OCI-LY7 (cell line): ENCODE measurements at regions of chr4 and their contacts with region 1.

Region 1: DNA sequence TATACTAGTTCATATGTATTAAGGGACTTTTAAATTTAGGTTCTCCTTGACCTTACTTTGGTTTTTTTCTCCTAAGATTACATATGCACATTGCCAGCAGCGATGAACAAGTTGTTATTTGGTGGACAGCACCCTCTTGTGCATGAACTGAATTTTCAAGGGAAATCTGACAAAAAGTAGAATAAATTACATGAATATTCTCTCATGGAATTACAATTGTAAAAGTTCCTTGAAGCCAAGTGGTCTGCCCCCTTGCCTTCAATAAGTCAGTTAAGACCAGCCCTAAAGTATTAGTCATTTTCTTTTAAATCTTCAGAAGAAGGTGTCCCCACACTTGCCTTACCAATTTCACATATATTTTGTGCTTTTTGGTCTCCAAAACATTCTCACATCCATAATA is 30.7 kb upstream of the SMARCA5 start:
- DNase-seq: peak; percentile 77
- H3K4me3 ChIP-seq: no peak overlapping the region
- H3K27ac ChIP-seq: no peak overlapping the region
- H3K4me1 ChIP-seq: peaks cover 15% of the 10 kb centered on the region
- CTCF ChIP-seq: peak; percentile 91

Region 2: GRCh38 chr4:142883040-142883832 is 599.6 kb before region 1 on chr4:
- CTCF ChIA-PET with region 1: no interaction called
- POLR2A ChIA-PET with region 1: no interaction called
- intact Hi-C with region 1: loop called (anchors 10 kb)
- DNase-seq: peak; percentile 5
- H3K4me3 ChIP-seq: no peak overlapping the region
- H3K27ac ChIP-seq: no peak overlapping the region
- H3K4me1 ChIP-seq: no peaks in the 10 kb centered on the region
- CTCF ChIP-seq: peak; percentile 65

Region 3: GRCh38 chr4:143184217-143185116 is 298.4 kb before region 1 on chr4 and contains the start of gene USP38:
- CTCF ChIA-PET with region 1: no interaction called
- POLR2A ChIA-PET with region 1: no interaction called
- intact Hi-C with region 1: loop called (anchors 5 kb)
- DNase-seq: peak; percentile 90
- H3K4me3 ChIP-seq: peak within 1 kb of the TSS; percentile 94
- H3K27ac ChIP-seq: peak within 1 kb of the TSS; percentile 75
- H3K4me1 ChIP-seq: peaks cover 29% of the 10 kb centered on the region
- CTCF ChIP-seq: 0 out of 2 replicates have a peak, but pooled peaks have one; percentile 46
- total RNA-seq, gene USP38: 21.8 and 23.6 TPM in 2 replicates

Region 4: DNA sequence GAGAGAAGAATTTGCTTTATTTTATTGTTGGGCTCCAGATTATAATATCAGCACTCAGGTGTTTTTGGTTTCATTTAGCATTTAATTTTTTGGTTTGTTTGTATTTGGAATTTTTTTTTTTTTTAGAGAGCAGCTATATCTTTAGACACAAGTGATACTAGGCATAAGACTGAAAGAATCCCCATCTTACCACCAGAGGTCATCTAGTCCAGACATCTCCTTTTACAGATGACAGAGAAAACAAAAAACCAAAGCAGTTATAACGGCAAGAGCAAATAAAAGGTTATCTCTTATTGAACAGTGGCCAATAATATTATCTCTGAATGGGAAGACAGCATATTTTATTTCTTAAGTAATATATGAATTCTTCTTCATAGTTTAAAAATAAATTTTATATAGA is 275.3 kb before region 1 on chr4:
- CTCF ChIA-PET with region 1: no interaction called
- POLR2A ChIA-PET with region 1: no interaction called
- intact Hi-C with region 1: loop called (anchors 1 kb)
- DNase-seq: peak; percentile 29
- H3K4me3 ChIP-seq: no peak overlapping the region
- H3K27ac ChIP-seq: no peak overlapping the region
- H3K4me1 ChIP-seq: no peaks in the 10 kb centered on the region
- CTCF ChIP-seq: peak; percentile 61

Region 5: DNA sequence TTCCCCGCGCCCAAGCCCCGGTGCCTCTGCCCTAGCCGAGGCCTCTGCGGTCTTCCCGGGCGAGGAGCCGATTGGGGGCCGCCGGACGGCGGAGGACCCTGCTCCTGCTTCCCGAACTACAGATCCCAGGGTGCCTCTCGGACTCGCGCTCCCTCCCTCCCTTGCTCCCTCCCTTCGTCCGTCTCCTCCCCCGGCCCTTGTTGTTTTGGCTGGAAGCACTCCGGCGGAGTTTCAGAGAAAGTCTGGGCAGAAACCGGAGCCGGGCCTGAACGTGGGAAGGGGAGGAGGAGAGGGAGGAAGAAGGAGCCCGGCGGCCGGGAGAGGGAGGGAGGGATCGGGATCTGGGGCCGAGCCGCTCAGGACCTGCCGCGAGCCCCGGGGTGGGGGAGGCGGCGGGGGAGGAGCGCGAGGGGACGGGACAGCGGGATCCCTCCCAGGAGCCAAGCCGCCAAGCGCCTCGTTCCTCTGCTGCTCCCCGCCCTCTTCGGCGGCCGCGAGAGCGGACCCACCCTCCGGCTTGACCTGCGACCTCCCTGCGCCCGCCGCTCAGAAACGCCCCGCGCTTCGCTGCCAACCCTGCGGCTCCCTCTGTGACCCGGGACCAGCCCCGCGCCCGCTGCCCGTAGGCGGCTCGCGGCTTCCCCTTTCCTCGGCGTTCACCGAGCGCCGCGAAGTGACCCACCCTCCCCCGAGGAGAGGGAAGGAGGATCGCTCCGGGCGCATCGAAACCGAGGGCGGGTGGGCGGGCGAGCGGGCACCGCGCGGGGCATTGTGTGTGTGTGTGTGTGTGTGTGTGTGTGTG is 146.7 kb before region 1 on chr4:
- CTCF ChIA-PET with region 1: no interaction called
- POLR2A ChIA-PET with region 1: interaction called, 4 read pairs
- intact Hi-C with region 1: loop called (anchors 2 kb)
- DNase-seq: peak; percentile 74
- H3K4me3 ChIP-seq: peak overlapping the region; percentile 94
- H3K27ac ChIP-seq: peak overlapping the region; percentile 59
- H3K4me1 ChIP-seq: peaks cover 43% of the 10 kb centered on the region
- CTCF ChIP-seq: no peak

Region 6: GRCh38 chr4:143399113-143399949 is 83.5 kb before region 1 on chr4:
- CTCF ChIA-PET with region 1: interaction called, 3 read pairs
- POLR2A ChIA-PET with region 1: interaction called, 20 read pairs
- intact Hi-C with region 1: loop called (anchors 1 kb)
- DNase-seq: peak; percentile 72
- H3K4me3 ChIP-seq: peak overlapping the region; percentile 12
- H3K27ac ChIP-seq: peak overlapping the region; percentile 97
- H3K4me1 ChIP-seq: peaks cover 99% of the 10 kb centered on the region
- CTCF ChIP-seq: peak; percentile 97

Region 7: DNA sequence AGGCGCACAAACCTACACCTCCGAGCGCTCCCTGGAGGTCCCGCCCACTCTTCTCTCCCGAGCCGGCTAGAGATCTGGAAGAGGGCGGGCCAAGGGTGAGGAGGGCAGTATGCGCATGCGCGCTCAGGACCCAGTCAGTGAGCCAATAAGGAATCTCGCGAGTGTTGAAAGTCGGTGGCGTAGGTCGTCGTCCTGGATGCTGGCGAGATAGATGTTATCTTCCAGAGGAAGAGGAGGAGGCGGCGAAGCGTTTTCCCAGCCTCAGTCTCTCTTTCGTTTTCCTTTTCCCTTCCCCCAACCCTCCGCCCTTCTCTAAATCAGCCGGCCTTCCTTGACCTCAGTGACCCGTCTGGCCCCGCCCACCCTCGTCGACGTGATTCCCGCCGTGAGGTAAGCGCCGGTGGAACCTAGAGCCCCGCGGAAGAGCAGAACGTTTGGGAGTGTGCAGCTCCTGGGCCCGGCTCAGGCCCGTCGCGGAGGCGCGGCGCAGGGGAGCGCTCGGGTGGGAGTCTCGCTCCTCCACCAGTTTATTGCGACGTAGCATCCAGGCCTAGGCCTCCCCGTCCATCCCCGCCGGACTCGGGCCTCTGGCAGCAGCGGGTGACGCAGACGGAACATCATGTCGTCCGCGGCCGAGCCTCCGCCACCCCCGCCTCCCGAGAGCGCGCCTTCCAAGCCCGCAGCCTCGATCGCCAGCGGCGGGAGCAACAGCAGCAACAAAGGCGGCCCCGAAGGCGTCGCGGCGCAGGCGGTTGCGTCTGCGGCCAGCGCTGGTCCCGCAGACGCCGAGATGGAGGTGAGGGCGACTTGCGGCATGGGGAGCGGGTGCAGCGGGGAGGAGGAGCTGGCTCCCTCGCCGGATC is 30.7 kb after region 1 on chr4 and contains the start of gene SMARCA5:
- CTCF ChIA-PET with region 1: interaction called, 10 read pairs
- POLR2A ChIA-PET with region 1: interaction called, 6 read pairs
- intact Hi-C with region 1: no loop called
- DNase-seq: peak; percentile 98
- H3K4me3 ChIP-seq: peak within 1 kb of the TSS; percentile 96
- H3K27ac ChIP-seq: peak within 1 kb of the TSS; percentile 81
- H3K4me1 ChIP-seq: peaks cover 36% of the 10 kb centered on the region
- CTCF ChIP-seq: no peak
- total RNA-seq, gene SMARCA5: 52.4 and 63.4 TPM in 2 replicates